H1 (cell line): ENCODE measurements at regions of chr10 and their contacts with region 1.

Region 1: GRCh38 chr10:4849555-4850242 is 23.7 kb downstream of the AKR1E2 start:
- DNase-seq: peak; percentile 88 to 91
- H3K4me3 ChIP-seq: no peak overlapping the region
- H3K27ac ChIP-seq: no peak overlapping the region
- H3K4me1 ChIP-seq: peaks cover 0 to 3% (median 2%) of the 10 kb centered on the region in 4 experiments; a peak in 4 of 7 replicates
- H3K27me3 ChIP-seq: 0 out of 7 replicates have a peak, but pooled peaks cover 0 to 3% (median 0%) of the 10 kb centered on the region in 4 experiments
- CTCF ChIP-seq: peak; percentile 94 to 100 (median 100)
- EP300 ChIP-seq: no peak
- POLR2A ChIP-seq: no peak
- RAD21 ChIP-seq: peak; percentile 99

Region 2: DNA sequence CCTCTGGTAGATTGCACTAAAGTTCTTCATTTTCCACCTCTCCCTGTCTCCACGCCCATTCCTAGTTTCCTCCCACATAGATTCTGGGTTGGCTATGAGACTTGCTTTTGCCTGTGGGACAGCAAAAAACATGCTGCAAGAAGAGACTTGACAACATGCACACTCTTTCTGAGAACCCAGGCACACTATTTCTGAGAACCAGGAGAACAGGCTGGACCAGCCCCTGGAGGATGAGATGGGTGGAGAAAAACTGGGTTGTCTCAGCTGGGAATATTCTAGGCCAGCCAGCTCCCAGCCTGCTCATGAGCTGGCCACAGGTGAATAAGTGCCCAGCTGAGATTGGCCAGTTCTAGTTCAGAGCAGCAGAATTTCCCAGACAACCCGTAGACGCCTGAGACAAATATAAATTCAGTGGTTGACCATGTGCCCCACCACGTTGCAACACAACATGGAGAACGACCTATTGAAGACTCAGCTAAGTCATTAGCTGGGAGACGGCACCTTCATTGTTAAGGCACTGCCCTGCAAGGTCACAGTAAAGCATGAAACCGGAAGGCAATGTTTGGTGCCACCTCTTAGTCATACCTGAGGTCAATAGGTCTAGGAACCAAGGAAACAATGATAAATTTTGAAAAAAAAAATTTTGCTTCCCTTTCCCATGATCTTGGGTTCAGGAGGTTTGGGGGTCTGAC is 116.4 kb before region 1 on chr10:
- CTCF ChIA-PET with region 1: no interaction called
- POLR2A ChIA-PET with region 1: no interaction called
- DNase-seq: no peak
- H3K4me3 ChIP-seq: no peak overlapping the region
- H3K27ac ChIP-seq: no peak overlapping the region
- H3K4me1 ChIP-seq: no peaks in the 10 kb centered on the region
- H3K27me3 ChIP-seq: no peaks in the 10 kb centered on the region
- CTCF ChIP-seq: no peak
- EP300 ChIP-seq: no peak
- POLR2A ChIP-seq: no peak
- RAD21 ChIP-seq: no peak

Region 3: GRCh38 chr10:4767033-4767814 is 82.5 kb before region 1 on chr10:
- CTCF ChIA-PET with region 1: no interaction called
- POLR2A ChIA-PET with region 1: no interaction called
- DNase-seq: no peak
- H3K4me3 ChIP-seq: no peak overlapping the region
- H3K27ac ChIP-seq: no peak overlapping the region
- H3K4me1 ChIP-seq: peaks cover 0 to 3% (median 0%) of the 10 kb centered on the region in 4 experiments; a peak in 1 of 7 replicates
- H3K27me3 ChIP-seq: no peaks in the 10 kb centered on the region
- CTCF ChIP-seq: peak in 2 of 3 experiments; percentile 45 to 51; a peak in 2 of 4 replicates
- EP300 ChIP-seq: no peak
- POLR2A ChIP-seq: no peak
- RAD21 ChIP-seq: peak; percentile 72 to 77

Region 4: DNA sequence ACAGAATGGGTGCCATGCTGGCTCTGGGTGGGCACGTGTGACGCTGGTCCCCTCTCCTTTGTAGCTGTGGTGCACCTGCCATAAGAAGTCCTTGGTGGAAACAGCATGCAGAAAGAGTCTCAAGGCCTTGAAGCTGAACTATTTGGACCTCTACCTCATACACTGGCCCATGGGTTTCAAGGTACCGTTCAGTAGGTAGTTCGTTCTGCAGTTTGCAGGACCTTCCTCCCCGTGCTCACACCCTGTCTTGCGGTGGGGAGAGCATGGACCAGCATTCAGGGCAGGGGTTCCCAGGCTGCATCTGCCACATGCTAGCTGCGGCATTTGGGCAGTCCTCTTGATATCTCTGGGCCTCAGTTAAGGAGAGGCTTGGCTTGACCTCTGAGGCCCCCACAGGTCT is 16.4 kb before region 1 on chr10:
- CTCF ChIA-PET with region 1: interaction called, 66 read pairs
- POLR2A ChIA-PET with region 1: no interaction called
- DNase-seq: no peak
- H3K4me3 ChIP-seq: no peak overlapping the region
- H3K27ac ChIP-seq: no peak overlapping the region
- H3K4me1 ChIP-seq: no peaks in the 10 kb centered on the region
- H3K27me3 ChIP-seq: no peaks in the 10 kb centered on the region; a peak in 1 of 7 replicates
- CTCF ChIP-seq: no peak
- EP300 ChIP-seq: no peak
- POLR2A ChIP-seq: no peak
- RAD21 ChIP-seq: no peak

Region 5: GRCh38 chr10:4867520-4868356 is 18.0 kb after region 1 on chr10:
- CTCF ChIA-PET with region 1: interaction called, 24 read pairs
- POLR2A ChIA-PET with region 1: no interaction called
- DNase-seq: no peak
- H3K4me3 ChIP-seq: no peak overlapping the region
- H3K27ac ChIP-seq: no peak overlapping the region
- H3K4me1 ChIP-seq: peaks cover 0 to 3% (median 0%) of the 10 kb centered on the region in 4 experiments; a peak in 1 of 7 replicates
- H3K27me3 ChIP-seq: no peaks in the 10 kb centered on the region
- CTCF ChIP-seq: no peak
- EP300 ChIP-seq: no peak
- POLR2A ChIP-seq: no peak
- RAD21 ChIP-seq: no peak

Region 6: GRCh38 chr10:4947635-4948596 is 98.2 kb after region 1 on chr10:
- CTCF ChIA-PET with region 1: interaction called, 14 read pairs
- POLR2A ChIA-PET with region 1: no interaction called
- DNase-seq: no peak
- H3K4me3 ChIP-seq: no peak overlapping the region
- H3K27ac ChIP-seq: no peak overlapping the region
- H3K4me1 ChIP-seq: peaks cover 3 to 21% (median 14%) of the 10 kb centered on the region in 4 experiments
- H3K27me3 ChIP-seq: no peaks in the 10 kb centered on the region; a peak in 1 of 7 replicates
- CTCF ChIP-seq: no peak
- EP300 ChIP-seq: no peak
- POLR2A ChIP-seq: no peak
- RAD21 ChIP-seq: no peak

Region 7: DNA sequence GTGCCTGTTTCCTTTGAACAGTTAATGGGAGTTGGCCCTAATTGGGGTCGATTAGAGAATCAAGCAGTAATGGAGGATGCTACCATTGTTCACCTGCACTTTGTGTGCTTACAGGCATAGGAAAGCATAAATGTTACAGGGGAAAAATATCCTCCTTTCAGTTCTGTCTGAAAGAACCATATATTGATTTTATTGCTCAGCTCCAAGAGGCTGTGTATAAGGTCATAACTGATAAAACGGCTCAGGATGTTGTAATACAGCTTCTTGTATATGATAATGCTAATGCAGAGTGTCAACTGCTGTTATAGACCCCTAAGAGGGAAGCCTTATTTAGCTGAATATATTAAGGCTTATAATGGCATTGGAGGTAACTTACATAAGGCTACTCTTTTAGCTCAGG is 186.8 kb after region 1 on chr10:
- CTCF ChIA-PET with region 1: interaction called, 19 read pairs
- POLR2A ChIA-PET with region 1: no interaction called
- DNase-seq: no peak
- H3K4me3 ChIP-seq: no peak overlapping the region
- H3K27ac ChIP-seq: no peak overlapping the region
- H3K4me1 ChIP-seq: no peaks in the 10 kb centered on the region
- H3K27me3 ChIP-seq: no peaks in the 10 kb centered on the region
- CTCF ChIP-seq: no peak
- EP300 ChIP-seq: no peak
- POLR2A ChIP-seq: no peak
- RAD21 ChIP-seq: no peak

Region 8: DNA sequence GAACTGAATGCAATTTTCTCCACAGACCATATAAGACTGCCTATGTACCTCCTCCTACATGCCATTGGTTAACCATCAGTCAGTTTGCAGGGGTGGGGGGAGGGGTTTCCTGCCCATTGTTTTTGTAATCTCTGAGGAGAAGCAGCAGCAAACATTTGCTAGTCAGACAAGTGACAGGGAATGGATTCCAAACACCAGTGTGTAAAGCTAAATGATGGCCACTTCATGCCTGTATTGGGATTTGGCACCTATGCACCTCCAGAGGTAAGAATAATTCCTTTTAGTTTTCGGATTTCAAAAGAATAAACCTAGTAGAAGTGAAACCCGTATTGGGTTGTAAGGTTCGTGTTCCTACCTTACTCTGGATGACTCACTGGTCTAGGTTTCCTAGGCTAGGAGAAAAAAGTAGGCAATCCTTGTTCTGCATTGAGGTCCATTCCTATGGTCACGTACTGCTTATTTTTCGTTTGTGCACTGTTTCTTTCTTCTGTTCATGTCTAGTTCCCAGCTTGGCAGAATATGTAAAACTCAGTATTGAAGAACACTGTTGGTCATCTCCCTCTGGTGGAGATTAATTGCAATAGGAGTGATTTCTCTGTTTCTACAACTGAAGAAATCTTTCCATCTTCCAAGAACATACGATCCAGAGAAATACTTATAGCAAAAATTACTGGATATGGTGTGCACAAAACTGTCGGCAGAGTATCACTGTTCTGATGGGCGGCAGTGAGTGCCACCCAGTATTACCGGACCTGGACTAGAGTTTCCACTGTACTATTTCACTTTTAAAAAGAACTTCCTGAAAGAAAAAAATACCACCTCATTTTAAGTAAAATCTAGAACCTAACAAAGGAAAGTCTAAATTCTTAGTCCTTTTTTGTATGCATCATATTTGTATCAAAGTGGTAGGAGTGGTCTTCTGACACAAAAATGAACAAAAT is 244.8 kb after region 1 on chr10 and contains the start of gene AKR1C3:
- CTCF ChIA-PET with region 1: interaction called, 52 read pairs
- POLR2A ChIA-PET with region 1: no interaction called
- DNase-seq: peak; percentile 27 to 48
- H3K4me3 ChIP-seq: peak within 1 kb of the TSS in 1 of 4 experiments; percentile 34; a peak in 1 of 8 replicates
- H3K27ac ChIP-seq: no peak within 1 kb of the TSS
- H3K4me1 ChIP-seq: peaks cover 0 to 6% (median 1%) of the 10 kb centered on the region in 4 experiments; a peak in 3 of 7 replicates
- H3K27me3 ChIP-seq: no peaks in the 10 kb centered on the region
- CTCF ChIP-seq: peak in 2 of 3 experiments; percentile 37 to 56; a peak in 2 of 4 replicates
- EP300 ChIP-seq: no peak
- POLR2A ChIP-seq: no peak
- RAD21 ChIP-seq: peak; percentile 38 to 54; a peak in 3 of 4 replicates
- total RNA-seq, gene AKR1C3: 4.5 and 4.6 TPM in 2 replicates

Region 9: DNA sequence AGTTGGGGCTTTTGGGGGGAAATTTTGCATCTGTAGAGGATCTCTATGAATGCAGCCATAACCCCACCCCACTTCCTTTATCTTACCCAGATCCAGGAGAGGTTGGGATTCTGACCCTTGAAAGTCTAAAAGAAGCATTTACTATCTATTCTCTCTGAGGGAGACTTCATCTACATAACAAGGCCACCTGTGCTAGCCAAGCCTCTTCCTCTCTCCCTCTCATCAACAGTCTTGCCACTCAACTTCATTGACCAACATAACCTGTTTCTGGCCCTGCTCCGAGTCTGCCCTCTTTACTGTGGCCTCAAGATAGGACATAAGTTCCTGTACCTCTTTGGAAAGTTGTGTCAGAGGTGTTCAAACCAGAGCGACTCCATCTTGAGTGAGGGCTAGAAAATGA is 535.5 kb after region 1 on chr10:
- CTCF ChIA-PET with region 1: interaction called, 14 read pairs
- POLR2A ChIA-PET with region 1: no interaction called
- DNase-seq: peak; percentile 15 to 44
- H3K4me3 ChIP-seq: no peak overlapping the region
- H3K27ac ChIP-seq: no peak overlapping the region
- H3K4me1 ChIP-seq: no peaks in the 10 kb centered on the region; a peak in 1 of 7 replicates
- H3K27me3 ChIP-seq: no peaks in the 10 kb centered on the region
- CTCF ChIP-seq: no peak
- EP300 ChIP-seq: no peak
- POLR2A ChIP-seq: no peak
- RAD21 ChIP-seq: no peak